ENCODE measurements at regions of chr7 and their contacts with region 1.

Region 1: DNA sequence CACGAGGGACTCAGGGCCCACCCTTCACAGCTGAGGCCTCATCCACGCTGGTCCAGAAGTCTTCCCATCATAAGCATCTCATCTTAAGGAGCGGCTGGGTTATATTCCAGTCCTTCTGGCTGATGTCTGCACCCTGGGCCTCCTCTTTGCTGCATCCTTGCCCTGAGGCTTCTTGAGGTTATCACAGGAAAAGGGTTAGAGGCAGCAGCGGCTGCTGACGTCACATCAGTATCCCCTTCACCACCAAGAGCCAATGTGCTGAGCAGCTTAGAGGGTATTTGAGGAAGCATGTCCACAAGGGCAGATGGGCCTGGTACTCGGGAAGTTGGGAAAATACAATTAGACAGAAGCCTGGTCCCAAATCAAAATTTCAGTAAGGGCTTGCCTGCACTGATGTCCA is 125.1 kb downstream of the PLXNA4 start:
- DNase-seq: peak; percentile 75
- ATAC-seq: peak; percentile 71
- H3K4me3 Mint-ChIP-seq: peak overlapping the region; percentile 4
- H3K27ac Mint-ChIP-seq: peak overlapping the region; percentile 84
- H3K4me1 Mint-ChIP-seq: peaks cover 98% of the 10 kb centered on the region
- H3K27me3 Mint-ChIP-seq: no peaks in the 10 kb centered on the region

Region 2: DNA sequence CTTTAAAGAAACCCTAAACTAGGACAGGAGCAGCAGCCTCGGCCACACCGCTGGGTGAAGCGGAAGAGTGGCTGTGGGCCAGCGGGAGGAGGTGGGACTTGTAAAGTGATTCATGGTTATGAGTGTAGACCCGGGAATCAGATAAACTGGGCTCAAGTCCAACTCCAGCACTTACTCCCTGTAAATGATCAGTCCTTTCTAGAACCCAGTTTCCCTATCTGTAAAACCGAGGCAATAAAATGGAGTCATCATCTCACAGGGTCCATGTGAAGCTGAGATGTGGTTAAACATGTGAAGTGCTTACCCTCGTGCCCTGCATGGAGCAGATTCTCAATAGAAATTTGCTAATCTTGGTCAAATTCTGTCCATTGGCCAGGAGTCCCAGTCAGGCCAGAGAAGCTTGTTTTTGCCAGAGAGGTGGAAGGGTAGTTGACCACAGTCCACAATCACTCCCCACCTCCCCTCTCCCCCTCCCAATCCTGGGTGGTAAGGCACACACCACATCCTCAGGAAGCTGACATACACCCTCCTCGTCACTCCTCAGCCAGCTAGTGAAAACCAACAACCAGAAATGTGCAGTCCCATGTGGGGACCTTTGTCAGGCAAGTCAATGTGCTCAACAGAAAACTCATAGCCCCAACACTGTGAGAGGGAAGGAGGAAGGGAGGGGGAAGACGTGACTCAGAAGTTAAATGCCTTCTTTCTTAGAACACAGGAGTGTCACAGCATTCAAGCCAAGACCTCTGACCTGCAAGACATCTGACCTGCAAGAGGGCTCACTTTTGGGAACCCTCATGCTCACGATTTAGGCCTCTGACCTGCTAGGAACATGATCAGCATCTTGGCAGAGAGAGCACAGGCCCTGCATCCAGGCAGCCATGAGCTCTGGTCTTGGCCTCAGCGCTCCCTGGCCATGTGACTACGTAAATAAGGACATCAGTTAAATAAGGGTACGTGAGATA is 20.0 kb before region 1 on chr7:
- CTCF ChIA-PET with region 1: interaction called, 10 read pairs
- POLR2A ChIA-PET with region 1: interaction called, 11 read pairs
- DNase-seq: peak; percentile 90
- ATAC-seq: peak; percentile 88
- H3K4me3 Mint-ChIP-seq: peak overlapping the region; percentile 3
- H3K27ac Mint-ChIP-seq: peak overlapping the region; percentile 89
- H3K4me1 Mint-ChIP-seq: peaks cover 98% of the 10 kb centered on the region
- H3K27me3 Mint-ChIP-seq: no peaks in the 10 kb centered on the region

Region 3: GRCh38 chr7:132437730-132438129 is 13.4 kb before region 1 on chr7:
- CTCF ChIA-PET with region 1: interaction called, 7 read pairs
- POLR2A ChIA-PET with region 1: interaction called, 16 read pairs
- DNase-seq: peak; percentile 88
- ATAC-seq: peak; percentile 73
- H3K4me3 Mint-ChIP-seq: peak overlapping the region; percentile 38
- H3K27ac Mint-ChIP-seq: peak overlapping the region; percentile 89
- H3K4me1 Mint-ChIP-seq: peaks cover 98% of the 10 kb centered on the region
- H3K27me3 Mint-ChIP-seq: no peaks in the 10 kb centered on the region

Region 4: DNA sequence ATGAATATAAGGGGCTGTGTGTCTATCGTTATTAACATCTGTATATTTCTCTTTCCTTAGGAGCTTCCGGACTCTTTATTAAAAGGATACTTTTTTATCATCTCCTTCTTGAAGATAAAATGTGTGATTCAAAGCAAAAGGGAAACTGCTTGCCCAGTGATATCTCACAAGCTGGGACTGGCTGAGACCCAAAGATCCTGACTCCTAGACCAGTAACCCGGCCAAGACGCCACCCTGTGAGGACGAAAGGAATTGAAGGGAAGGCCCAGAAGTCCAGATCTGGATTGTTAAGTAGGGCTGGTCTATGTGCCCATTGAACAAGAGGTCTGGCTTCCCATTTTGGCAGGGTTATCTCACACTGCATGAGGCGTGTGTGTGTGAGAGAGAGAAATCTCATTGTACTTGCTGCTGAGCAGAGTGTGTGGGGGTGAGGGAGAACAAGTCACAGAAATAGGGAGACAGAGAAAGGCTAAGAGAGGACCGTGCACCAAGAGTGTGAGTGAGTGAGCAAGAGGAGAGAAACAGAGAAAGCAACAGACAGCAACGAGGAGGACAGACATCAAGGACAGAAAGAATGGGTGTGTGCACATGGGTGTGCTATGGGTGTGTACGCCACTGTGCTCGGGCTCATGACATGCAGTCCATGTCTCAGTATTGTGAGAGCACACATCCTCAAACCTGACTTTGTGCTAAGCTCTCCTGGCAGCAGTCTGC is 49.7 kb after region 1 on chr7:
- CTCF ChIA-PET with region 1: no interaction called
- POLR2A ChIA-PET with region 1: no interaction called
- DNase-seq: no peak
- ATAC-seq: no peak
- H3K4me3 Mint-ChIP-seq: no peak overlapping the region
- H3K27ac Mint-ChIP-seq: peak overlapping the region; percentile 2
- H3K4me1 Mint-ChIP-seq: peaks cover 6% of the 10 kb centered on the region
- H3K27me3 Mint-ChIP-seq: peaks cover 2% of the 10 kb centered on the region

Measured in activated CD8-positive, alpha-beta T cell treated with anti-CD3 and anti-CD28 coated beads, Interleukin-2, amount 10 ng/mL, durations not matched to agents 7 days and 5 days (primary cell).